ENCODE measurements at regions of chr19 and their contacts with region 1.

Region 1: GRCh38 chr19:34480971-34481821 is at the start of gene WTIP:
- DNase-seq: peak; percentile 31
- CTCF ChIP-seq: no peak

Region 2: DNA sequence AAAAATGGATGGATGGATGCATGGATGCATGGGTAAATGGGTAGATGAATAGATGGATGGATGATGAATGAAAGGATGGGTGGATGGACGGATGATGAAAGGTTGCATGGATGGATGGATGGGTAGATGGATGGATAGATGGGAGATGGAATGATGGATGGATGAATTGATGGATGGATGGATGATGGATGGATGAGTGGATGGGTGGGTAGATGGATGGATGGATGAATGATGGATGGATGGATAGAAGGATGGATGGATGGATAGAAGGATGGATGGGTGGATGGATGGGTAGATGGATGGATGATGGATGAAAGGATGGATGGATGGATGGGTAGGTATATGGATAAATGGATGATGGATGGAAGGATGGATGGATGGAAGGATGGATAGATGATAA is 424.0 kb before region 1 on chr19:
- in situ Hi-C with region 1: no loop called
- DNase-seq: no peak
- CTCF ChIP-seq: no peak

Region 3: DNA sequence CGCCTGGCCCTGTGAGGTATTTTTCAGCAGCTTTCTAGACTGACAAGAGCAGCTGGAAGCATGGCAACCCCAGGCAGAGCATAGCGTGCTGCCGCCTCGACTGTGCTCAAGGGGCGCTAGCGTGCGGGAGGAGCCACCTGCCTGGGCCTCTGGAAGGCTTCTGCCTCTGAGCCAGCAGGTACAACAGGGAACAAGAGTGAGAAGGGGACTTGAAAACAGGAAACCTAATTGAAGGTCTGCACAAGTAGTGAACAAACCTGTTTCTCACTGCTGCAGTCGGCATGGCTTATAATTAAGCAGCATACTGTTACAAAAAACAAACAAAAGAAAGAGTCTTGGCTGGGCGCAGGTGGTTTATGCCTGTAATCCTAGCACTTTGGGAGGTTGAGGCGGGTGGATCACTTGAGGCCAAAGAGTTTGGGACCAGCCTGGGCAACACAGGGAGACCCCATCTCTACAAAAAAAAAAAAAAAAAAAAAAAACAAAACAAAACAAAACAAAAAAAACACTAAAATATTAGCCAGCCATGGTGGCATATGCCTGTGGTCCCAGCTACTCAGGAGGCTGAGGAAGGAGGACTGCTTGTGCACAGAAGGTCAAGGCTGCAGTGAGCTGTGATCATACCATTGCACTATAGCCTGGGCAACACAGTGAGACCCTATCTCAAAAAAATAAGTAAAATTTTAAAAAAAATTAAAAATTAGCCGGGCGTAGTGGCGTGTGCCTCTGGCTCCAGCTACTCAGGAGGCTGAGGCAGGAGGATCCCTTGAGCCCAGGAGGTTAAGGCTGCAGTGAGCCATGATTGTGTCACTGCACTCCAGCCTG is 239.5 kb before region 1 on chr19:
- in situ Hi-C with region 1: no loop called
- DNase-seq: no peak
- CTCF ChIP-seq: peak; percentile 24

Region 4: DNA sequence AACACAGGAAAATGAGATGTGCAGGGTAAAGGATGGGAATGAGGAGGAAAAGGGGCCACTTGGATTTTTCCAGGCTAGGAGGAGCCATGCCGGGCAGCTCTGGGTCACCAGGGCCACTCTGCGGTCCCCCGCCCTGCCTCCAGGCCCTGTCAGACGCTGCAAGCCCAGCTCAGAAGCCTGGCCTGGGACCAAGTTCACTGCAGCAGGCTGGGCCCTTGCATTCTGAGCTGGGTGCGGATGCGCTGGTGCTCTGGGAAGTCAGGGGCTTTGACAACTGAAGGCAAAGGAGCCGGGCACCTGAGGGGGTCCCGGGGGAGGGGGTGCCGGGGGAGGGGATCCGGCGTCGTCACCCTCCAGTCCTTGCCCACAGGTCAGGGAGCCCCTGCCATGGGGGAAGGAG is 77.8 kb after region 1 on chr19:
- in situ Hi-C with region 1: no loop called
- DNase-seq: no peak
- CTCF ChIP-seq: no peak

Region 5: GRCh38 chr19:34712395-34713261 is 231.4 kb after region 1 on chr19:
- in situ Hi-C with region 1: loop called (anchors 25 kb)
- DNase-seq: peak; percentile 55
- CTCF ChIP-seq: peak; percentile 68